Endothelial cell of umbilical vein (primary cell): ENCODE measurements at regions of chr14 and their contacts with region 1.

Region 1: DNA sequence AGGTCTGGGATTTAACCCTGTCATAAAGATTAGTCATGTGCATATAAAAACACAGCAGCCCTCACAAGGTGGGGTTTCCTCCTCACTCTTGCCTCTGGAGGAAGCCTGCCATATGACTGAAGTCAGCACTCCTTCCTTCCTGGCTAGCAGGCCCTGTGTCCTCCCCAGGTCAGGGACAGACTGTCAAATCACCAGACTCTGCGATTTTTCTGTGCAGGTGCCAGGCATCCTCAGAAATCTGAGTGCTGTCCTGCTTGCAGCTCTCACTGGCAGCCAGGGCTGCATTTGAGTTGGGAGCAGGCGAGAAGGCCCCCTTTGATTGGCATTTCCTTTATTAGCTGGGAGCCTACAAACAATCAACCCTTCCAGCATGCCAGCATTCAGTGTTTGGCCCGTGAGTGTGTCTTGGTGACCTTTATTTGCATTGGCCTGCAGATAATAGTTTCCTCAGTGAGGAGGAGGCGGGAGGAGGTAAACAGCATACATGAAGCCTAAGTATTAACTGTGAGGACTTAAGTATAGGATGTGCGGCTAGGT is 183.8 kb upstream of the ARHGAP5 start:
- DNase-seq: peak; percentile 74
- H3K4me3 ChIP-seq: no peak overlapping the region
- H3K27ac ChIP-seq: no peak overlapping the region
- H3K4me1 ChIP-seq: peaks cover 14% of the 10 kb centered on the region
- H3K27me3 ChIP-seq: no peaks in the 10 kb centered on the region
- CTCF ChIP-seq: no peak
- POLR2A ChIP-seq: no peak

Region 2: GRCh38 chr14:31834616-31835015 is 58.7 kb before region 1 on chr14:
- CTCF ChIA-PET with region 1: no interaction called
- POLR2A ChIA-PET with region 1: no interaction called
- dilution Hi-C with region 1: no loop called
- intact Hi-C with region 1: no loop called
- DNase-seq: peak; percentile 83
- H3K4me3 ChIP-seq: no peak overlapping the region
- H3K27ac ChIP-seq: no peak overlapping the region
- H3K4me1 ChIP-seq: peaks cover 7% of the 10 kb centered on the region
- H3K27me3 ChIP-seq: no peaks in the 10 kb centered on the region
- CTCF ChIP-seq: no peak
- POLR2A ChIP-seq: no peak

Region 3: DNA sequence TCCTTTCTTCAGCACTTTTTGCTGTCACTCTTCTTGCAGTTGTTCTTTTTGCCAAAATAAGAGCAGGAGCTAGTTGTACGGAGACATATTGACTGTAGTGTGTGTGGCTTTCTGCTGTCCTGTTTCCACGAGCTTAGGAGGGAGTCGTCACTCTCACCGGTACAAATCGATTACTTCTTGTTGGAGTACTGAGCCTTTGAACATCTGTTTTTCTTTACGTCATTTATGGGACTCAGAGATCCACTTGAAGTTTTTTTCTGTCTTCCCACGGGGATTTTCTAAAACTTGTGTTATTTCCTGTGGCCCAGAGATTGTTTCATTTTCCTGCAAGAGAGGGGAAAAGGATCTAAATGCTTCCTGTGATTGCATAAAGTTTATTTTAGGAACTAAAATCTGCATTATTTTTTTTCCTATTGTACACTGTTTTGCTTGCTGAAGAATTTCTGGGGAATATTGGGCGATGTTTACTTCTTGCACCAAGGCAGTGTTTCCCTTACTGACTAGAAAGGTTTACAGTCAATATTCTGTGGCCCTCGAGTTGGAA is 16.0 kb before region 1 on chr14:
- CTCF ChIA-PET with region 1: no interaction called
- POLR2A ChIA-PET with region 1: no interaction called
- dilution Hi-C with region 1: no loop called
- intact Hi-C with region 1: loop called (anchors 2 kb)
- DNase-seq: peak; percentile 81
- H3K4me3 ChIP-seq: peak overlapping the region in 1 of 3 experiments; percentile 29
- H3K27ac ChIP-seq: peak overlapping the region; percentile 16
- H3K4me1 ChIP-seq: peaks cover 11% of the 10 kb centered on the region
- H3K27me3 ChIP-seq: no peaks in the 10 kb centered on the region
- CTCF ChIP-seq: no peak
- POLR2A ChIP-seq: no peak